Lower leg skin (tissue), 4 donors: ENCODE measurements at regions of chr12 and their contacts with region 1.

Region 1: DNA sequence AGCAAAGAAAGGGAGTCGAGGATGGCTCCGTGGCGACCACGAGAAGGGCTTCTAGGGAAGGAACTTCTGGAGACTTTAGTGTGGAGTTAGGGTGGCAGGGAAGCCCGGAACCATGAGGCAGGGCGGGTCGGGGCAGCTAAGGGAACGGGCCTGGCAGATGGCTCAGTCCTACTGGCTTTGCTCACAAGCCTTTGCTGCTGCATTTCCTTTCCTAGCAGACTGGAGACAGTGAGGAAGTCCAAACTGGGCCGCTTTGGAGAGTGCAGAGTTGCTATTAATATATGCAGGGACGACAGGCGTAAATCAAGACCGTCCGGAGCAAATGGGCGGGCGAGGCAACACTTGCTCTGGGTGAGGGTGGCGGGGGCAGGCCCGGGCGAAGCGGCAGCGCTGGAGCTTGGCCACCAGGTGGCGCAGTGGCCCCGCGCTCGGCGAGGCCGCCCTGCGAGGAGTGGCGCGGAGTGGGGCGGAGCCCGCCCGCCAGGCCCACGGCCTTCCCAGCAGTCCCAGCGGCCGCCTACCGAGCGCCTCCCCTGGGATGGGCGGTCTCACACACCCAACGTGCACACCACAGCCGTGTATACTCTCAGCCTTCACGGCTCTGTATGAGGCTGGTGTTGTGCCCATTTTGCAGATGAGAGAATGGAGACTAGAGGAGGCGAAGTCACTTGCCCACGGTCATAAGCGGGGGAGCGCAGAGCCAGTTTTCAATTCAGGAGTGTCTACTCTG is 24.4 kb upstream of the LRTM2 start:
- DNase-seq: peak; percentile 89 to 98
- H3K4me3 ChIP-seq: peak overlapping the region; percentile 54
- CTCF ChIP-seq: peak in 1 of 3 donors; percentile 66
- POLR2A ChIP-seq: no peak

Region 2: DNA sequence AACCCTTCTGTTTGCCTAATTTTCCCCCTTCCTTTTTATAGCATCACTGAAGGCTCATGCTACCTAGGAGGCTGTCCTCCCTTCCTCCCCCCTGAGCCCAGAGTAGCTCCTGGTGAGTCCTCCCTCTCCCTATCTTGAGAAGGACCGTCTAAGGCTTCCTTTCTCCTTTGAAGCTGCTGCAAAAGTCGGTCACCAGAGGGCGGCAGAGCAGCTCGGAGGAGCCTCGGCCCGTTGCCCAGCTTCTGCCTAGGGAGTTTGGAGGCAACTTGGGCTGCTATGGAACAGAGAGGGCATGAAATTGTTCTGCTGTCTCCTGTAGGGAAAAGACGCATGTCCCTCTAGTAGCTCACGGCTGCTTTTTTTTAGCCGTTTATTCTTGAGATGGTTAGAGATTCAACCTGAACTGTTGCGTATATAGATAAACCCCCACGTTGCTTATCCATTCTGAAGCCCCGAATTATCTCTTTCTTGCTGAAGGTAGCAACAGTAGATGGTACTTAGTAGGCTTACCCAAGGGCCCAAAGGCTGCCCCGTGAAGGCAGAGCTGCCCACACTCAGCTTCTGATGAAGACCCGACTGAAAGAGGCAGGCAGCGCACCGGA is 161.3 kb before region 1 on chr12:
- intact Hi-C with region 1: loop called (anchors 5 kb)
- DNase-seq: peak; percentile 57 to 92
- H3K4me3 ChIP-seq: no peak overlapping the region
- CTCF ChIP-seq: no peak
- POLR2A ChIP-seq: no peak

Region 3: GRCh38 chr12:1650260-1650977 is 145.5 kb before region 1 on chr12:
- intact Hi-C with region 1: loop called (anchors 5 kb)
- DNase-seq: no peak
- H3K4me3 ChIP-seq: no peak overlapping the region
- CTCF ChIP-seq: no peak
- POLR2A ChIP-seq: no peak

Region 4: GRCh38 chr12:1698638-1699214 is 97.2 kb before region 1 on chr12:
- intact Hi-C with region 1: loop called (anchors 5 kb)
- DNase-seq: no peak
- H3K4me3 ChIP-seq: no peak overlapping the region
- CTCF ChIP-seq: no peak
- POLR2A ChIP-seq: no peak

Region 5: GRCh38 chr12:1939801-1940607 is 144.1 kb after region 1 on chr12:
- intact Hi-C with region 1: loop called (anchors 5 kb)
- DNase-seq: peak; percentile 82 to 98
- H3K4me3 ChIP-seq: no peak overlapping the region
- CTCF ChIP-seq: peak in 1 of 3 donors; percentile 95
- POLR2A ChIP-seq: no peak

Region 6: DNA sequence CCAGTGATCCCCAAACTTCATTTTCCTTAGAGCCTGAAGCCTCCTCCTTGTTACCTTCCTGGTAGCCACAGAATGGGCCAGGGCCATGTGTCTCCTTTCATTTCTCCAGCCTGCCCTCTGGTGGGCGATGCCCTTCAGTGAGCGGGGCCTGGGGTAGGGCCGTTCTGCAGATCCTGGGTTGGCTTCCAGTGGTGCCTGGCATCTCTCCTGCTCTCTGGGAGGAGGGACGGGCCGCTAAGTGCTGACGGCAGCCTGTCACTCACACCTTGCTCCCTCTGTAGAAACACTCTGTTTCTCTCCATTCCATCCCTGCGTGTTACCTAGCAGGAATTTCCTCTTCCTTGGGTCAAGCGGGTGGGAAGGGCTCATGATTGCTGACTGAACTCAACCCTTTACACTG is 488.9 kb after region 1 on chr12:
- intact Hi-C with region 1: loop called (anchors 5 kb)
- DNase-seq: peak in 1 of 2 donors; percentile 90
- H3K4me3 ChIP-seq: no peak overlapping the region
- CTCF ChIP-seq: no peak
- POLR2A ChIP-seq: no peak